HEK293 (cell line): ENCODE measurements at regions of chr10 and their contacts with region 1.

Region 1: GRCh38 chr10:116809483-116810119 is 39.7 kb upstream of the ENO4 start:
- H3K4me3 ChIP-seq: no peak overlapping the region
- H3K27ac ChIP-seq: no peak overlapping the region
- H3K4me1 ChIP-seq: no peaks in the 10 kb centered on the region
- CTCF ChIP-seq: no peak

Region 2: DNA sequence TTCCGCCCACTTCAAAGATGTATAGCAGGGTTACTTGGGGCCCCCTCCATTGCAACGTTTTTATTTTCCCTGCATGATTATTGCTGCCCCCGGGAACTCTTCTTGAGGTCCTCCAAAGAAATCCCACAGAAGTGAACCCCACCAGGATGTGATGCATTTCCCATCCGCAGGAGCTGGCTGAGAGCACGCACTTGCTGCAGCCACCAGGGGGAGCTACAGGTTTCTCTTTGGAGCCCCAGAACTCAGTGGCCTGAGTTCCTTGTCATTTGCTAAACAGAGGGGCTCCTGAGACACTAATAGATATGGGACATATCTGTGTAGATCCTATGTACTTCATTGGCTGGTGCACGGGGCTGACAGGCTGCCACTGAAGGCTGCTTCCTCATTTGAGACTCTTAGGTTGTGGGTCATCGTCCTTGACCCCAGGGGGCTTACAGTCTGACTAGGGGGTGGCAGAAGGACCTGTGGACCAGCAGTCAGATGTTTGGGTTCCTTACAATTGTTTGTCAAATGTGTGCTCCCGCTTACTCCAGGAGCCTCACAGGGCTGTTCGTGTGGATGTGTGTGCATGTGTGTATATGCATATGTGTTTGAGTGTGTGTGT is 12.6 kb before region 1 on chr10:
- CTCF ChIA-PET with region 1: interaction called, 16 read pairs
- POLR2A ChIA-PET with region 1: no interaction called
- H3K4me3 ChIP-seq: no peak overlapping the region
- H3K27ac ChIP-seq: no peak overlapping the region
- H3K4me1 ChIP-seq: no peaks in the 10 kb centered on the region
- CTCF ChIP-seq: peak; percentile 80

Region 3: GRCh38 chr10:116831086-116831485 is 21.5 kb after region 1 on chr10:
- CTCF ChIA-PET with region 1: no interaction called
- POLR2A ChIA-PET with region 1: no interaction called
- H3K4me3 ChIP-seq: no peak overlapping the region
- H3K27ac ChIP-seq: no peak overlapping the region
- H3K4me1 ChIP-seq: peaks cover 9% of the 10 kb centered on the region
- CTCF ChIP-seq: no peak